Left colon (tissue), 2 donors: ENCODE measurements at regions of chr10 and their contacts with region 1.

Region 1: GRCh38 chr10:74262856-74263255 is 111.8 kb downstream of the ADK start:
- DNase-seq: no peak
- ATAC-seq: no peak

Region 2: DNA sequence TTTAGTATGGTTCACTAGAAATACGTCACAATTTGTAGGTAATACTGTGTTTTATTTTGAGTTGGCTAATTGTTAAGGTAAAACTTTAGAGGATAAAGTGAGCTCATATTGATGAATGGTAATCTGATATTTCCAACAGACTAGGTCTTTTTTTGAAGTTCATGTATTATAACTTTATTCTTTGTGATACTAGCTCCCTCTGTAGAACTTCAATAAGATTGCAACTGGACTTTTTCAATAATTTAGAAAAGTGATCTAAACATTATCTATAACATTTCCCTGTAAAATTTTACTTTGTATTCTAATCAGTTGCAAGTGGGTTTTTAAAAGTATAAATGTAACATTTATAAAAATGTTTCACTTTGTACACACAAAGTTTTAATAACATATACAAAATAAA is 28.3 kb before region 1 on chr10:
- intact Hi-C with region 1: no loop called
- DNase-seq: no peak
- ATAC-seq: no peak

Region 3: GRCh38 chr10:74419958-74420375 is 157.1 kb after region 1 on chr10:
- intact Hi-C with region 1: no loop called
- DNase-seq: peak in 1 of 2 donors; percentile 34
- ATAC-seq: peak; percentile 70

Region 4: DNA sequence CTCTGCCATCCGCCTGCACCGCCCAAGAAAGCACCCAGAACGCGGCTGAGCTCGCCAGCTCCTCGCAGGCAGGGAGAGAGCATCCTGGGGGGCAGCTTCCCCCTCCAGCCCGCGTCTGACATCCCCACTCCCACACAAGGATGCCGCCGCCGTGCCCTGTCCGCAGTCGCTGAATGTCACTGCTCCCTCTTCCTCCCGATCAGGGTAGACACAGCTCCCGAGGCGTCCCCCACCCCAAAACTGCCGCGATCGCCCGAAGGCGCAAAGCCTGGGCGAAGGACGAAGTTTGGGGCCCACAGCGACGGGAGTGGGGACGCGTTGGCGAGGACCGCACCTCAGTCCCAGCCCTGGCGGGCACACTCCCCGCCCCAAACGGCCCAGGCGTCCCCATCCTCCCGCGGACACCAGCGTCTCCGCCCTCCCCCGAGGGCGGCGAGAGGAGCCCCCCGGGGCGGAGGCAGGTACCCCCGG is 562.1 kb after region 1 on chr10:
- intact Hi-C with region 1: loop called in 1 of 2 experiments (anchors 5 kb)
- DNase-seq: peak; percentile 49 to 54
- ATAC-seq: no peak

Region 5: DNA sequence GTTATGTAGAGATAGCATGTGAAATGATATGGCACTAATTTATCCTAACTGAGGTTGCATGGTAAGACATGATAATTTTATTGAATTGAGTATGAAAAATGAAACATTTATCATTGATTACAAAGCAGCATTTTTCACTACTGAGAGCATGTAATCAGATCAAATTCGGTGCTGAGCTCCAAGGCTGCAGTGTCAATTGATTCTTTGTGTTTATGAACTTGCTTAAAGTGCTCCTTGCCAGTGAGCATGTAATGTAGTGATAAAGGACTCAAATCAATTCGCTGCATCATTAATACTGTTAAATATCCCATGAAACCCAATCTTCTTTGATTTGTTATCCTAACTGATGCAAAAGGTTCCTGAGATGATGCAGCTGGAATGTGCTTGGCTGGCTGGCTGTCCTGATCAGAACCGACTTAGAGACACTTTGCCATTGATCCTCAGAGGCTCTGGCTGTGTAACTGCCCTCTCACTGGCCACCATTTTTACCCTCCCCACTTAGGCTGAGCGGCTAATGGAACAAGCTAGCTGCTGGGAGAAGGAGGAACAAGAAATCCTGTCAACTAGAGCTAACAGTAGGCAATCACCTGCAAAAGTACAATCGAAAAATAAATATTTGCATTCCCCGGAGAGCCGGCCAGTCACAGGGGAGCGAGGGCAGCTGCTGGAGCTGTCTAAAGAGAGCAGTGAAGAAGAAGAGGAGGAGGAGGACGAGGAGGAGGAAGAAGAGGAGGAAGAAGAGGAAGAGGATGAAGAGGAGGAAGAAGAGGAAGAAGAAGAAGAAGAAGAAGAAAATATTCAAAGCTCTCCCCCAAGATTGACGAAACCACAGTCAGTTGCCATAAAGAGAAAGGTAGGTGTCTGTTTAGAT is 758.8 kb after region 1 on chr10:
- intact Hi-C with region 1: loop called in 1 of 2 experiments (anchors 5 kb)
- DNase-seq: peak in 1 of 2 donors; percentile 31
- ATAC-seq: peak; percentile 87

Region 6: GRCh38 chr10:75099952-75100763 is 837.3 kb after region 1 on chr10:
- intact Hi-C with region 1: loop called in 1 of 2 experiments (anchors 5 kb)
- DNase-seq: peak; percentile 42 to 83
- ATAC-seq: peak; percentile 95